IMR-90 (cell line): ENCODE measurements at regions of chr16 and their contacts with region 1.

Region 1: DNA sequence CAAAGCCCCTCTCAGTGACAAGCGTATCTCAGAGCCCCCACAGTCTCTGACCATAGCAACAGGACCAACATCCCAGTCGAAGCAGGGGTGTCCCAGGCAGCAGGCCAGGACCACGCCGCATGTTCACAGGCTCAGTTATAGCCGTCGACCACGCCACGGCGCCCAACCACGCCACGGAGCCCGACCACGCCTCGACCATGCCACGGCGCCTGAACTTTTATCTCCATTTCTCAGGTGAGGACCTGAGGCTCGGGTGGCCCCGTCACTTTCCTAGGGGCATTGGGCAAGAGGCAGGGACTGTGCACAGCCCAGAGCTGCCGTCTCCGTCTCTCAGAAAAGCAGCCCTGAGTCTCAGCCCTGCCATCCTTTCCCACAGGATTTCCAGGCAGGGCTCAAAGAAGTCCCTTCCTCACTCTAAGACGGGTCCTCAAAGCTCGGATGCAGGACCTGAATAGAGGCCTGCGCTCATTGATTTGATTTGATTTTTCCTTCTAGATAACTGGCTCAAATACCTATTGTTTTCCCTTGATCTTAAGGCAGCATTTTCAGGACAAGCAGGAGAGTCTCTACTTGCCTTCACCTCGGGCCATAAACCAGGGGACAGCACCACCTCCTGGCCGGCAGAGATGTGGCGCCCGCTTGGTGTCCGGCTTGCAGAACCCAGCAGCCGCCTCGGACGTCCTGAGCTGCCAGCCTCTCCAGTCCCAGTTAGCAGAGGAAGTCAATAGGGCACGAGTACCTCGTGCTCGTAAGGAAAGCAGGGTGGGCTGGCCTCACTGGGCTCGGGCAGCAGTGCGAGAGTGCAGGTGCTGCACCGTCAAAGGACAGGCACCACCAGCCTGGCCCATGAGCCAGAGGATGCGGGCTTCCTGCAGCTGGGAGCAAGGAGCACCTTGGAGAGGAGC is 38.7 kb downstream of the C16orf95 start:
- DNase-seq: peak; percentile 77
- ATAC-seq: peak; percentile 100
- H3K4me3 ChIP-seq: no peak overlapping the region
- H3K27ac ChIP-seq: no peak overlapping the region
- H3K4me1 ChIP-seq: no peaks in the 10 kb centered on the region; the same call in 1 of the 2 replicates
- H3K27me3 ChIP-seq: peaks cover 11% of the 10 kb centered on the region
- CTCF ChIP-seq: peak; percentile 94
- POLR2A ChIP-seq: no peak
- RAD21 ChIP-seq: peak; percentile 96

Region 2: GRCh38 chr16:87062569-87063442 is 215.6 kb before region 1 on chr16:
- CTCF ChIA-PET with region 1: interaction called, 14 read pairs
- POLR2A ChIA-PET with region 1: interaction called, 4 read pairs
- dilution Hi-C with region 1: no loop called
- in situ Hi-C with region 1: no loop called
- intact Hi-C with region 1: loop called (anchors 1 kb)
- DNase-seq: peak; percentile 67
- ATAC-seq: peak; percentile 92
- H3K4me3 ChIP-seq: peak overlapping the region; percentile 26; the same call in 1 of the 2 replicates
- H3K27ac ChIP-seq: no peak overlapping the region
- H3K4me1 ChIP-seq: no peaks in the 10 kb centered on the region; the same call in 1 of the 2 replicates
- H3K27me3 ChIP-seq: no peaks in the 10 kb centered on the region; the same call in 1 of the 2 replicates
- CTCF ChIP-seq: peak; percentile 91
- POLR2A ChIP-seq: no peak
- RAD21 ChIP-seq: peak; percentile 90

Region 3: GRCh38 chr16:87076950-87077749 is 201.3 kb before region 1 on chr16:
- CTCF ChIA-PET with region 1: no interaction called
- POLR2A ChIA-PET with region 1: no interaction called
- dilution Hi-C with region 1: no loop called
- in situ Hi-C with region 1: loop called (anchors 10 kb)
- intact Hi-C with region 1: no loop called
- DNase-seq: peak; percentile 55
- ATAC-seq: peak; percentile 78
- H3K4me3 ChIP-seq: no peak overlapping the region
- H3K27ac ChIP-seq: no peak overlapping the region
- H3K4me1 ChIP-seq: no peaks in the 10 kb centered on the region
- H3K27me3 ChIP-seq: peaks cover 14% of the 10 kb centered on the region
- CTCF ChIP-seq: peak; percentile 64
- POLR2A ChIP-seq: no peak
- RAD21 ChIP-seq: peak; percentile 67

Region 4: DNA sequence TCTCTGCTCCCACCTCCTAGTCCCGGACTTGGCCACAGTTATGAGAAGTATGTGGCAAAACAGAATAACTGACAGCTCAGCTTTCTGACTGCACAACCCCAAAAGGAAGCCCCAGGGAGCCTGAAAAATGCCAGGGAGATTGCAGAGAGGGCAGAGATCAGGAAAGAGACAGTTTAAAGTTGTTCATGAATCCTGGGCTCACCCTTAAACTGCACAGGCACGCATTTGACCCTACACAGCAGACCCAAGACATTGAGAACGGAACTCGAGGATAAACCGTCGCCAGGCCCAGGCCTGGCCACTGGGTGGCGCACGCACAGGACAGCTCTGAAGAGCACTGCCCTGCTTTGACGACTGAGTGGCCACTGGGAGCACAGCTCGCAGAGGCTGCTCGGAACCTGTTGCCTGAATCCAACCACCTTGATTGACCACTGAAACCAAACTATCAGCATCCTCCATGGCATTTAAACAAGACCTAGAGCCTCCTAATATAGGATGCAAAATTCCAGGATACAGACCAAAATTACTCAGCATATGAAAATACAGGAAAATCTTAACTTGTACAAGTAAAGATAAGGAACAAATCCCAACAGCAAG is 75.3 kb before region 1 on chr16:
- CTCF ChIA-PET with region 1: interaction called, 4 read pairs
- POLR2A ChIA-PET with region 1: interaction called, 5 read pairs
- dilution Hi-C with region 1: no loop called
- in situ Hi-C with region 1: no loop called
- intact Hi-C with region 1: loop called (anchors 1 kb)
- DNase-seq: peak; percentile 77
- ATAC-seq: peak; percentile 66
- H3K4me3 ChIP-seq: no peak overlapping the region
- H3K27ac ChIP-seq: peak overlapping the region; percentile 27
- H3K4me1 ChIP-seq: peaks cover 28% of the 10 kb centered on the region
- H3K27me3 ChIP-seq: no peaks in the 10 kb centered on the region
- CTCF ChIP-seq: peak; percentile 83
- POLR2A ChIP-seq: no peak
- RAD21 ChIP-seq: peak; percentile 65